Left cardiac atrium (tissue), 4 donors: ENCODE measurements at regions of chr13 and their contacts with region 1.

Region 1: GRCh38 chr13:50123862-50124536 is 108.8 kb downstream of the KCNRG start:
- DNase-seq: peak; percentile 79
- ATAC-seq: peak; percentile 89 to 93

Region 2: GRCh38 chr13:49996951-49997895 is 126.8 kb before region 1 on chr13 and contains the start of gene TRIM13:
- intact Hi-C with region 1: loop called in 1 of 2 experiments (anchors 5 kb)
- DNase-seq: peak; percentile 94
- ATAC-seq: peak; percentile 88 to 89
- total RNA-seq, gene TRIM13: 19.5 to 19.6 TPM